Heart left ventricle (tissue), 16 donors: ENCODE measurements at regions of chr14 and their contacts with region 1.

Region 1: GRCh38 chr14:92456215-92457015 is 57.2 kb upstream of the RIN3 start:
- DNase-seq: peak; percentile 66 to 80 (median 72)
- ATAC-seq: peak; percentile 28 to 82 (median 62)
- H3K4me3 ChIP-seq: peak overlapping the region in 1 of 12 donors; percentile 26
- H3K27ac ChIP-seq: peak overlapping the region in 2 of 12 donors; percentile 3 to 13
- H3K4me1 ChIP-seq: peaks cover 6 to 35% (median 19%) of the 10 kb centered on the region in 12 donors
- H3K27me3 ChIP-seq: no peaks in the 10 kb centered on the region
- CTCF ChIP-seq: peak; percentile 66 to 87 (median 78)
- POLR2A ChIP-seq: no peak

Region 2: GRCh38 chr14:92135267-92135666 is 321.1 kb before region 1 on chr14:
- intact Hi-C with region 1: loop called in 7 of 10 experiments (anchors 5 to 10 kb)
- DNase-seq: no peak
- ATAC-seq: no peak
- H3K4me3 ChIP-seq: no peak overlapping the region
- H3K27ac ChIP-seq: no peak overlapping the region
- H3K4me1 ChIP-seq: peaks cover 0 to 3% (median 0%) of the 10 kb centered on the region in 12 donors
- H3K27me3 ChIP-seq: no peaks in the 10 kb centered on the region
- CTCF ChIP-seq: peak; percentile 26 to 60 (median 46)
- POLR2A ChIP-seq: no peak

Region 3: DNA sequence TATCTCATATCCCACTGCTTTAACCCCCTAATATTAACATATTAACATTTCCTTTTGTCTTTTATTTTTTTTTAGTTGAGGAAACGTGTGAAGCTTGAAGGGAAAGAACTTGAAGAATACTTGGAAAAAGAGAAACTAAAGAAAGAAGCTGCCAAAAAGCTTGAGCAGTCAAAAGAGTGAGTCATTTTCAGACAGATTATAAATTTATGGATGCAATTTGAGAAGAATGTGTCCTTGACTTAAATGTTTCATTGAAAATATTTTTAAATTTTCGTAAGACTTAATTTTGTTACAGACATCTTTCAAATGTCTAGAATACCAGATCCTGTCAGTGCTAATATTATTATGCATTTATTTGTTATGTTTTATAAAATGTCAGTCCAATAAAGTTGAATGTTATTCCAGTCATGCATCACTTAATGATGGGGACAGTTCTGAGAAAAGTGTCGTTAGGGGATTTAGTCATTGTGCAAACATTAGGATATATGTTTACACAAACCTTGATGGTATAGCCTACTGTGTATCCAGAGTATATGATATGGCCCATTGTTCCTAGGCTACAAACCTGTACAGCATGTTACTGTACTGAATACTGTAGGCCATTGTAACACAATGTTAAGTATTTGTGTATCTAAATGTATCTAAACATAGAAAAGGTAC is 302.0 kb before region 1 on chr14:
- intact Hi-C with region 1: loop called in 2 of 10 experiments (anchors 10 kb)
- DNase-seq: no peak
- ATAC-seq: no peak
- H3K4me3 ChIP-seq: no peak overlapping the region
- H3K27ac ChIP-seq: no peak overlapping the region
- H3K4me1 ChIP-seq: no peaks in the 10 kb centered on the region
- H3K27me3 ChIP-seq: no peaks in the 10 kb centered on the region
- CTCF ChIP-seq: no peak
- POLR2A ChIP-seq: no peak

Region 4: DNA sequence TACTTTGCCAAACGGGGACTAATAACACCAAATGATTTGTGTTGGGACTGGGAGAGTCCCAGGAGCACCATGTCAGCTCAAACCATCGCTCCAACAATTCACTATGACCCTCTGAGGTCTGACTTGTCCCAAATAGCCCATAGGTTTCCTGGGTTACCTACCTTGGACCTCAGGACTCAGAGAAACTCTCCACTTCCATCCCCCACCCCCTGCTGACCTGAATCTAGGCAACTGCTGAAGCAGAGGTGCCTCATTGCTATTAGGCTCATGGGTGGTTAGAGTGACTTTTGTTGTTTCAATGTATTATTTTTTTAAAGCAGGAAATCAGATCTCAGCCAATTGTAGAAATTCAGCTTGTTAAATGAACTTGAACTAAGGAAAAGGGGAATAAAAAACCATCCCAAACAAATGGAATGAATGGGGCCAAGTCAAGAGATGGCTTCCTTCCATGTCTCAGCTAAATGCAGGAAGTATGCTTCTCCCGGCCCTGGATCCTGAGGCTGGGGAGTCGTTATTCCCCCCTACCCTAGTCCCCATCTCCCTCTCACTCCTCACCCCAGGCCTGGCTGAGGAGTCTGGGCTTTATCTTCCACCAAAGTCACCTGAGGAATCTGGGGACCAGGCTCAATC is 214.3 kb before region 1 on chr14:
- intact Hi-C with region 1: no loop called
- DNase-seq: no peak
- ATAC-seq: no peak
- H3K4me3 ChIP-seq: no peak overlapping the region
- H3K27ac ChIP-seq: no peak overlapping the region
- H3K4me1 ChIP-seq: peaks cover 0 to 3% (median 0%) of the 10 kb centered on the region in 12 donors
- H3K27me3 ChIP-seq: no peaks in the 10 kb centered on the region
- CTCF ChIP-seq: no peak
- POLR2A ChIP-seq: no peak

Region 5: DNA sequence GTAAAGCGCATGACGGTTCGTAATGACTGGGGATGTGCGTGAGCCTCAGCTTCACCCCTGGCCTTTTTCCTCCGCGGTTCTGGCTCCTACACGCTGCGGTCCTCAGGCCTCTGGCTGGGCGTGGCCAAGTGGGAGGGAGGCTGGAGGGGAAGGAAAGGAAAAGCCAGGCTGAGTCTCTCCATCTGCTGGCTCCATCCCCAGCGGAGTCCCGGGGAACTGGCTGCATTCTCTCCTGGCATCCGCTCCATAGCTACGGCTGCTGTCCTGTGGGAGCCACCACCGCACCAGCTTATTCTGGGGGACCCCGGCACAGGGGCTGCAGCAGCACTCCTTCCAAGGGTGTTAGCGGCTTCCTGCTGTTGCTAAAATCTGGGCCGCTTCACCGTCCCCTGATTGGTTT is 201.6 kb before region 1 on chr14:
- intact Hi-C with region 1: no loop called
- DNase-seq: peak; percentile 49 to 76 (median 69)
- ATAC-seq: peak; percentile 64 to 88 (median 84)
- H3K4me3 ChIP-seq: peak overlapping the region in 4 of 12 donors; percentile 11 to 36 (median 20)
- H3K27ac ChIP-seq: no peak overlapping the region
- H3K4me1 ChIP-seq: peaks cover 0 to 20% (median 0%) of the 10 kb centered on the region in 12 donors
- H3K27me3 ChIP-seq: peaks cover 0 to 50% (median 6%) of the 10 kb centered on the region in 9 donors
- CTCF ChIP-seq: no peak
- POLR2A ChIP-seq: no peak

Region 6: DNA sequence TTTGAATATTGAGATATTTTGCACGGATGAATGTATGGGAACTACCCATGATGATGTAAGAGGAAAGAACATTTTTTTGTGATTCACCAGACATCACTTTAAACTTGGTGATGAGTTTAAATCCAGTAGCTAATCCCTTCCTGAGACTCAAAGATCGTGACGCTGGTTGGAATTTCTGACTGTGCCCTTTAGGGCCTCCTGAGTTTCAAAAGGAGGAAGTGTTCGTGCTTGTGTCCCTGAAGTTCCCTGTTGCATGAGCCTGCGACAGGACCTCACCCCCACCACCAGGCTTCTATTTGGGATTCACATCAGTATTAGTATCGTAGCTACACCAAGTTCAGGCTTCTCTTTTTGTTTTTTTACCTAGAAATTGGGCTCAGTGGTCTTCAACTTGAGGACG is 38.6 kb after region 1 on chr14:
- intact Hi-C with region 1: no loop called
- DNase-seq: peak in 1 of 5 donors; percentile 16
- ATAC-seq: peak in 3 of 4 donors; percentile 24 to 46 (median 32)
- H3K4me3 ChIP-seq: no peak overlapping the region
- H3K27ac ChIP-seq: peak overlapping the region in 1 of 12 donors; percentile 66
- H3K4me1 ChIP-seq: peaks cover 0 to 55% (median 4%) of the 10 kb centered on the region in 12 donors
- H3K27me3 ChIP-seq: no peaks in the 10 kb centered on the region
- CTCF ChIP-seq: no peak
- POLR2A ChIP-seq: no peak

Region 7: DNA sequence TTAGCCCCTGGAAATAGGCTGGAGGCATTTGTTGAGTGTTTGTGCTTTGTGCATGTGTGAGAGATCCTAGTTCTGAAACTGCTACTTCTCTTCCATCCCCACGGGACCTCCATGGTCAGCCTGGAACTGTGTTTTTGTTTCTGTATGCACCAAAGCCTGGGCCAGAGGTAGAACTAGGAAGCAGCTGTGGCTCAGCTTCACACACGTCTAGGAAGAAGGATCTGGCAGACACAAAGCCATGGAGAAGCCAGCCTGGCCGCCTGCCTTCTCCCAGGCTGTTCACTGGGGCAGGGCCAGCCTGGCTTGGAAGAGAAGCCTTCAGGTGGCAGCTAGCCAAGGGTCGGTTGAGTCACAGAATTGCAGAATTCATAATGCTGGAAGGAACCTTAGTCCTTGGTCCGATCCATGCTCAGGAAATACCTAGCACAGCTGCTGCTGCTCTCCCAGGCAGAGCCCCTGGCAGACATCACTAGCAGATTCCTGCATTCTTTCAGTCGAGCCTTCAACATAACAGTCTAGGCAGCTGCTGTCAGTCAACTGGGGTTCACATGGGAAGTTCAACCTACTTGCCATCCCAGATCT is 84.1 kb after region 1 on chr14:
- intact Hi-C with region 1: loop called in 3 of 10 experiments (anchors 10 kb)
- DNase-seq: peak; percentile 93 to 96 (median 94)
- ATAC-seq: peak; percentile 91 to 97 (median 96)
- H3K4me3 ChIP-seq: peak overlapping the region in 3 of 12 donors; percentile 10 to 26 (median 14)
- H3K27ac ChIP-seq: peak overlapping the region; percentile 67 to 96 (median 87)
- H3K4me1 ChIP-seq: peaks cover 10 to 46% (median 28%) of the 10 kb centered on the region in 12 donors
- H3K27me3 ChIP-seq: no peaks in the 10 kb centered on the region
- CTCF ChIP-seq: no peak
- POLR2A ChIP-seq: no peak

Region 8: DNA sequence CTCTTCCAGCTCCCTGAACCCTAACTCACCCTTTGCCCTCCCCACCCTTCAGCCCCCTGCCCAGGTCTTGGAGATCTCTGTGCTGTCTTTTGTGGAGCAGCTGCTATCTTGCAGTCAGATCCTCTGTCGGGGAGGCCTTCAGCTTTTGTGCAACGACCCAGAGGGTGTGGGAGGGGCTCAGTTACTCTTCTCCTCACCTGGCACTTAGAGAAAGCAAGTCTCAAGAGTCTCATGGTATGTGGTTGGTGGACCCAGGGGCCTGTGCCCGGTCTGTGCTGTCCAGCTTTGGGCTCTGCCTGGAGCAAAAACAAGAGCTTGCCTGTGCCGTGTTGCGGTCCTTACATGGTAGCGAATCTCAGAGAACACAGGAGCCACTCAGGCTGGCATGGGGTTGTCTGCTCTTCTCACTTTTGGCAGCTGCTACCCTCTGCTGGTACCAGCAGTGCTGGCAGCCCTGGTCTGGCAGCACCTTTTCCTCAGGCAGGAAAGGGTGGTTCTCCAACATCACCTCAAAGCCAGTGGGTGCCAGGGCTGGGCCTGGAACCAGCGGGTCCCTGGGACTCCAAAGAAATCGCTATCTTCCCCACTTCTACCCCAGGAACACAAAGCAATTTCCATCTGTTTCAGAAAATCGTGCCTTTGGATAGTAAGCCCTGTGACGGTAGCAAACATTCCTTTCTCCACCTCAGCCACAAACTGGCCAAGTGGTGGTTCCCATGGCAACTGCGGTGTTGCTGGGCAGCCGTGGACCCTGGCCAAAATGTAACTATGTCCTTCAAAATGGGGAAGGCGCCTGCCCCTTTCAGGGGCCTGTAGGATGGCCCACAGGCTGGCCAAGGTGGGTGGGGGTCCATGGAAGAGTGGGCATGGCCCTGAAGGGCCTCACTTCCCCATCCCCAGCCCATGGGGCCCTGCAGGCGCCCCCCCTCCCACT is 147.2 kb after region 1 on chr14:
- intact Hi-C with region 1: loop called in 1 of 10 experiments (anchors 5 kb)
- DNase-seq: peak in 4 of 5 donors; percentile 50 to 74 (median 64)
- ATAC-seq: peak; percentile 88 to 93 (median 90)
- H3K4me3 ChIP-seq: no peak overlapping the region
- H3K27ac ChIP-seq: peak overlapping the region in 7 of 12 donors; percentile 8 to 89 (median 45)
- H3K4me1 ChIP-seq: peaks cover 0 to 31% (median 23%) of the 10 kb centered on the region in 12 donors
- H3K27me3 ChIP-seq: no peaks in the 10 kb centered on the region
- CTCF ChIP-seq: peak in 11 of 12 donors; percentile 21 to 59 (median 39)
- POLR2A ChIP-seq: no peak

Region 9: DNA sequence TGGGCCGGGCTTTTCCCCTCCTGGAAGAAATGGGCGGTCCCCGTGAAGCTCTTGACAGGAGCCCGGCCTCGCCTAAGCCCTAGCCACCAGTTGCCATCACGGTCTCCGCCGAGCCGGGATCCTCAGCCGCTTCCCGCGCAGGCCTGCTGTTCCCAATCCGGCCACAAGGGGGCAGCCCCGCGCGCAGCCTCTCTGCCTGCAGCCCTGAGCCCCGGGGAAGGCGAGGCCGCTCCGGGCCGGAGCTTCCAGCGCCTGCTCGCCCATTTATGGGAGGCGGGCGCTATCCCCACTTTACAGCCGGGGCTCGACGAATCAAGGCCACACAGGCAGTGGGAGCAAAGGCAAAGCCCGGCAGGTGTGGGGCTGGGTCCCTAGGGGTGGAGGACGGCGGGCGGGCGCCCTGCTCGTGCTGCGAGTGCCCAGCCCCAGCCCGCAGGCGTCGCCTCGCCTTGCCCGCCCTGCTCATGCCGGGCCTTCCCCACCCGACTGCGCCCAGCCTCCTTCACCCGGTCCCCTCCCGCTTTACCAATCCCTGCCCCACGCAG is 230.6 kb after region 1 on chr14:
- intact Hi-C with region 1: loop called in 5 of 10 experiments (anchors 5 to 10 kb)
- DNase-seq: peak; percentile 66 to 89 (median 77)
- ATAC-seq: peak; percentile 62 to 88 (median 82)
- H3K4me3 ChIP-seq: peak overlapping the region; percentile 28 to 58 (median 48)
- H3K27ac ChIP-seq: peak overlapping the region in 3 of 12 donors; percentile 27 to 54 (median 44)
- H3K4me1 ChIP-seq: peaks cover 0 to 22% (median 10%) of the 10 kb centered on the region in 12 donors
- H3K27me3 ChIP-seq: no peaks in the 10 kb centered on the region
- CTCF ChIP-seq: peak; percentile 85 to 100 (median 99)
- POLR2A ChIP-seq: no peak

Region 10: DNA sequence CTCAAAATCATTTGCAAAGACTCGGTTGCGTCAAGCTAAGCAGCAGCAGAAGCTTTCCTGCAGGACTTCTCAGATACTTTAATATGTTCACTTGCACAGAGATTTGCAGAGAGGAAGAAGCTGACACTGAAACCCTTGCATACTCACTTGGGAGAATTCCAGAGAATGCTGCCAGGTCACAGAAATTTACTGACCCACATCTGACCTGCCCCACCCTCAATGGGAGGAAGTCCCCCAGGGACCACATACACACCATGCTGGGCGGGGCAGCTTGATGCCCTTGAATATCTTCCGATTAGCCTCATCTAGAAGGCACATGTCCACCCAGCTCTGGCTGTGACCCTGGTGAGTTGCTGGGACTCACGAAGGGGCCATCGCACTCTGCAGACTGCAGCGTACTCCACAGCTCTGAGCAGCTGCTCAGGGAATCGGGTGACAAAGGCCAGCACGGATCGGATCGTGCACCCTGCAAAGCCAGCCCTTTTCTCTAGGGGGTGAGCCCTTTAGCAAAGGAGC is 576.1 kb after region 1 on chr14:
- intact Hi-C with region 1: no loop called
- DNase-seq: no peak
- ATAC-seq: peak in 1 of 4 donors; percentile 9
- H3K4me3 ChIP-seq: no peak overlapping the region
- H3K27ac ChIP-seq: peak overlapping the region in 6 of 12 donors; percentile 14 to 90 (median 50)
- H3K4me1 ChIP-seq: peaks cover 13 to 78% (median 56%) of the 10 kb centered on the region in 12 donors
- H3K27me3 ChIP-seq: no peaks in the 10 kb centered on the region
- CTCF ChIP-seq: no peak
- POLR2A ChIP-seq: no peak